Cardiac septum (tissue), 1 donor: ENCODE measurements at regions of chr4 and their contacts with region 1.

Region 1: GRCh38 chr4:44845309-44845708 is 119.0 kb upstream of the GNPDA2 start:
- DNase-seq: no peak

Region 2: DNA sequence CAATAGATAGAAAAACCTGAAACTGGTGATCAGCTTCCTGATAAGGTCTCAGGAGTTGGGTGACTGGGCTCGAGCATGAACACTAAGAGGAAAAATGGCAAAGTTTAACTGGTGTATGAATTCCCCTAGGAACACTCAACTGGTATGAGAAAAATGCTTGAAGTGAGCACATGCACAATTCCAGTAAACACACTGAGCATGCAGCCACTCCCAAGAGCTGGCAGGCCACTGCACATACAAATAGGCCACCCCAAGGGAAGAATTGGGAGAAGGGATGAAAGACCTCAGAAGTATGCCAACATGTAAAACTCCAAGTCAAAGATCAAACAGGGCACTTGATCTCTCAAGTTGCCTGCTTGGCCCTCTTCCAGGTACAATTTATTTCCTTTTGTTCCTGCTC is 73.5 kb before region 1 on chr4:
- intact Hi-C with region 1: loop called (anchors 2 kb)
- DNase-seq: no peak